Sigmoid colon (tissue), 7 donors: ENCODE measurements at regions of chr20 and their contacts with region 1.

Region 1: DNA sequence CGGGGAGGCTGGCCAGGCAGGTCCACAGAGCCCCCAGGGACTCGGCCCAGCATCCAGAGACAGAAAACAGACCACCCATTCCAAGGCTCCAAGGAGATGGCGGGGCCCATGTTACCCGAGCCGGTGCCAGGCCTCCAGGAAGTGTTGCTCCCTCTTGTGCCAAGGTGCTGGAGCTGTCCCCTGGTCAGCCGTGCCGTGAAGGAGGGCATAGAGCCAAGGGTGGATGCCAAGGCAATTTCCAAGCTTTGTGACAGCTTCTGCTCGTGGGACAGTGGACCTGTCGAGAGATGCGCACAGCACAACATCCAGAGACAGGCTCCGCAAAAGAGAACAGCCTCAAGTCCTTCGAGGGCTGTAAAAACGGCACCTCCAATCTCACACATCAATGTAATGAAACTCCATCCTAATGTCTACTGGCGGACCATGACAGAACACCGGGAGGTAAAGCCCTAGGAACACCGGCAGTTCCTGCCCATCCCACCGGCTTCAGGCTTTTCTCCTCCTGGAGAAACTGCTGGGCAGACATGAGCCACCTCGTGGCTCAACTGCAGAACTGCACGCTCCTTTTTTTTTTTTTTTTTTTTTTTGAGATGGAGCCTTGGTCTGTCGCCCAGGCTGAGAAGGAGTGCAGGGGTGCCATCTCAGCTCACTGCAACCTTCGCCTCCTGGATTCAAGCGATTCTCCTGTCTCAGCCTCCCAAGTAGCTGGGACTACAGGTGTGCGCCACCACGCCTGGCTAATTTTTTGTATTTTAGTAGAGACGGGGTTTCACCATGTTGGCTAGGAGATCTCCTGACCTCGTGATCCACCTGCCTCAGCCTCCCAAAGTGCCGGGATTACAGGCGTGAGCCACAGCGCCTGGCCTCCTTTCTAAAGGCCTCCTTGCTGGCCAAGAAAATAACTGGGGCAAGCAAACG is 30.9 kb upstream of the AVP start:
- DNase-seq: no peak
- H3K4me3 ChIP-seq: no peak overlapping the region
- H3K27ac ChIP-seq: no peak overlapping the region
- H3K4me1 ChIP-seq: peaks cover 0 to 13% (median 8%) of the 10 kb centered on the region in 4 donors
- H3K27me3 ChIP-seq: no peaks in the 10 kb centered on the region
- CTCF ChIP-seq: peak in 3 of 4 experiments; percentile 44 to 64 (median 55)
- EP300 ChIP-seq: no peak
- POLR2A ChIP-seq: no peak

Region 2: GRCh38 chr20:3051385-3052019 is 63.9 kb before region 1 on chr20:
- intact Hi-C with region 1: loop called (anchors 2 kb)
- DNase-seq: no peak
- H3K4me3 ChIP-seq: no peak overlapping the region
- H3K27ac ChIP-seq: no peak overlapping the region
- H3K4me1 ChIP-seq: peaks cover 0 to 13% (median 11%) of the 10 kb centered on the region in 4 donors
- H3K27me3 ChIP-seq: no peaks in the 10 kb centered on the region
- CTCF ChIP-seq: no peak
- EP300 ChIP-seq: no peak
- POLR2A ChIP-seq: no peak